OCI-LY7 (cell line): ENCODE measurements at regions of chr7 and their contacts with region 1.

Region 1: GRCh38 chr7:130875265-130875741 is 141.3 kb upstream of the KLF14 start:
- DNase-seq: peak; percentile 45
- H3K4me3 ChIP-seq: no peak overlapping the region
- H3K27ac ChIP-seq: no peak overlapping the region
- H3K4me1 ChIP-seq: no peaks in the 10 kb centered on the region
- CTCF ChIP-seq: peak; percentile 70

Region 2: GRCh38 chr7:129443612-129444011 is 1431.7 kb before region 1 on chr7:
- CTCF ChIA-PET with region 1: no interaction called
- POLR2A ChIA-PET with region 1: no interaction called
- intact Hi-C with region 1: no loop called
- DNase-seq: no peak
- H3K4me3 ChIP-seq: no peak overlapping the region
- H3K27ac ChIP-seq: no peak overlapping the region
- H3K4me1 ChIP-seq: no peaks in the 10 kb centered on the region
- CTCF ChIP-seq: no peak

Region 3: GRCh38 chr7:130182990-130183389 is 692.3 kb before region 1 on chr7:
- CTCF ChIA-PET with region 1: no interaction called
- POLR2A ChIA-PET with region 1: no interaction called
- intact Hi-C with region 1: no loop called
- DNase-seq: no peak
- H3K4me3 ChIP-seq: no peak overlapping the region
- H3K27ac ChIP-seq: no peak overlapping the region
- H3K4me1 ChIP-seq: no peaks in the 10 kb centered on the region
- CTCF ChIP-seq: no peak

Region 4: DNA sequence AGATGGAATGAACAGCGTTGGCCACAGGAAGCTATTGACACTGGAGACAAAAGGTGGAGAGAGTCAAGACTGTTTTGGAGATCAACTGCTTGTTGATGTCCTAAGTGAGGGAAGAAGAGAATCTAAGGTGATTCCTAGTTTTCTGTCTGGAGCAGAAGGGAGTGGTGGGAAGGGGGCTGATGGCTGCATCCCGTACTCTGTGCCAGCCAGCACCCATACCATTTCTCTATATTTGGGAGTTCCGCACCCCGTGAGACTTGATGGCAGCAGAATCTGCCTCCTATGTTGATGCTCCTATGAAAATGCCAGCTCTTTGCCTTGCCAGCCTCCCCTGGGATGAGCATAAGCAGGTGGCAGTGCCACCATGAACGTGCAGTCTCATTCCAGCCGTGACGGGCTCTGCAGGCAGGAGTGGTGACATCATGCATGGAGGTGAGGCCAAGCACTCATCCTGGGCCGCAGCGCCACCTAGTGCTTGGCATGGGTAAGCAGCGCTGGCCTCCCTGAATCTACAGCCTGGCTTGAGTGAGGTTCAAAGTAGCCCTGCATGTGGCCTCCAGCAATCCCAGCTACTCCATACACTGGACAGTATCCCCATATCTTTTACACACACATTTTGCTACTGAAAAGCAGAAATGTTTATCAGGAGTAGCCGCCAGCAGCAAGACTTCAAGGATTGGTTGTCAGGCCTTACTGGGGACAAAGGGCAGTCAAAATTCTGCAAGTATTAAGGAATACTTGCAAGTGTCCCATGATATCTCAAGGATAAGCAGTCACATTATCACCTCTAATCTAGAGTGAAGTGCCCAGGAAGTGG is 638.1 kb after region 1 on chr7:
- CTCF ChIA-PET with region 1: no interaction called
- POLR2A ChIA-PET with region 1: interaction called, 3 read pairs
- intact Hi-C with region 1: loop called (anchors 5 kb)
- DNase-seq: peak; percentile 77
- H3K4me3 ChIP-seq: no peak overlapping the region
- H3K27ac ChIP-seq: no peak overlapping the region
- H3K4me1 ChIP-seq: no peaks in the 10 kb centered on the region
- CTCF ChIP-seq: peak; percentile 94